Transverse colon (tissue), 4 donors: ENCODE measurements at regions of chr3 and their contacts with region 1.

Region 1: GRCh38 chr3:24264748-24265158 is 229.9 kb downstream of the THRB start:
- DNase-seq: no peak
- H3K4me3 ChIP-seq: no peak overlapping the region
- H3K27ac ChIP-seq: no peak overlapping the region
- H3K4me1 ChIP-seq: peaks cover 0 to 5% (median 0%) of the 10 kb centered on the region in 4 donors
- H3K27me3 ChIP-seq: no peaks in the 10 kb centered on the region
- CTCF ChIP-seq: peak; percentile 63 to 82 (median 76)
- EP300 ChIP-seq: no peak
- POLR2A ChIP-seq: no peak

Region 2: GRCh38 chr3:23533996-23534395 is 730.8 kb before region 1 on chr3:
- in situ Hi-C with region 1: no loop called
- intact Hi-C with region 1: no loop called
- DNase-seq: no peak
- H3K4me3 ChIP-seq: no peak overlapping the region
- H3K27ac ChIP-seq: no peak overlapping the region
- H3K4me1 ChIP-seq: no peaks in the 10 kb centered on the region
- H3K27me3 ChIP-seq: no peaks in the 10 kb centered on the region
- CTCF ChIP-seq: no peak
- EP300 ChIP-seq: no peak
- POLR2A ChIP-seq: no peak

Region 3: GRCh38 chr3:24288496-24289236 is 23.9 kb after region 1 on chr3:
- in situ Hi-C with region 1: no loop called
- intact Hi-C with region 1: loop called (anchors 2 kb)
- DNase-seq: peak; percentile 11
- H3K4me3 ChIP-seq: no peak overlapping the region
- H3K27ac ChIP-seq: peak overlapping the region; percentile 54 to 76 (median 66)
- H3K4me1 ChIP-seq: peaks cover 0 to 33% (median 12%) of the 10 kb centered on the region in 4 donors
- H3K27me3 ChIP-seq: no peaks in the 10 kb centered on the region
- CTCF ChIP-seq: no peak
- EP300 ChIP-seq: no peak
- POLR2A ChIP-seq: no peak

Region 4: DNA sequence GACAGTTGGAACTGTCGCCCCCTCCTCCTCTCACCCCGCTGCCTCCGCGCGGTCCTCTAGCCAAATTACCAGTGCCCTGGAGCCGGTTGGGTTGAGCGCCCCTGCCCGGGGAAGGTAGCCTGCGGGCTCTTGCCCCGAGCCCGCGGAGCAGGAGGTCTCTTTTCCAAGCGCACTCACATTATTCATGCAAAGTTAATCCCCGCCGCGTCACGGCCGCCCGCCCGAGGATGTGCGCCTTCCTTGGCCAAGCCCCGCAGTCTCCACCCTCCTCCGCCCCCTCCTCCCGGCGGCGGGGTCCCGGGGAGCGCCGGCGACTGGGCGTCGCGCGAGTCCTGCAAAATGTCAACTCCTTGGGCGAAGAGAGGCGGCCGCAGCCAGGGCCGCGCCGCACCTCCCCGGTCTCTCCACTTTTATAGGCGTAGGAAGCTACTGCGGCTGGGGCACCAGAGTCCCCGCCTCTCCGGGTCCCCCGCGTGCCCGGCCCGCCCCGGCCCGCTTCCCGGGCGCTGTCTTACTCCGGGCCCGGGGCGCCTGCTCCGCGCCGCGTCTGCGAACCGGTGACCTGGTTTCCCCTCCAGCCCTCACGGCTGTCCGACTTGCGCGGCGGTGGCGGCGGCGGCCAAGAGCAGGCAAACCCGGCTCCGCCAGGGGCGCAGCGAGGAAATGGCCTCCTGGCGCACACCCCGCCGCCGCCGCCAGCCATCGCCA is 230.0 kb after region 1 on chr3 and contains the start of gene THRB:
- in situ Hi-C with region 1: loop called in 1 of 4 experiments (anchors 25 kb)
- intact Hi-C with region 1: loop called (anchors 10 kb)
- DNase-seq: peak; percentile 77
- H3K4me3 ChIP-seq: peak within 1 kb of the TSS; percentile 51 to 80 (median 70)
- H3K27ac ChIP-seq: peak within 1 kb of the TSS; percentile 91 to 97 (median 94)
- H3K4me1 ChIP-seq: peaks cover 0 to 44% (median 23%) of the 10 kb centered on the region in 4 donors
- H3K27me3 ChIP-seq: no peaks in the 10 kb centered on the region
- CTCF ChIP-seq: peak in 2 of 5 experiments; percentile 18 to 23
- EP300 ChIP-seq: no peak
- POLR2A ChIP-seq: peak; percentile 86
- total RNA-seq, gene THRB: 9.8 to 52.4 (median 31.3) TPM

Region 5: DNA sequence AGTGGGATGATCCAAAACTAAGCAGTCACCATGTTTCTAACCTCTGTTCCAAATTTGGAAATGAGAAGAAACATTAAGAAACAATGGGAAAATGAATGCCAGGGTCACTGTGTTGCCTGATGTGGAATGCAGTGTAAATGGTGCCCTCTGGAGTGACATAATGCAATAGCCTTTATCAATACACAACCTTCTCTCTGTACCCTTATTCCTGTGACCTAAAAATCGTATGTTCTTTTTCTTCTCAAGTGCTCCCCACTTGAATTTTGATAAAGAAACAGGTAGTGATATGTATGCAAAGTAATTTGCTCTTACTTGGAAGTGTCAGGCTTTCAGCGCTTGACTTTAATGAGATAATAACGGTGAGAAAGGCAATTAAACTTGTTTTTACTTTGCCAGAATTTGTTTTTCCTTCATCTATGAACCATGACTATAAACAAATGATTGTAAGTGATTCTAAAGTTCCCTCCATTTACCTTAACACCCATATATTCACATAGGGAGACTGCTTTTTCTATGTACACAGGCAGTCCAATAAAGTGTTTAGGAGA is 375.7 kb after region 1 on chr3:
- in situ Hi-C with region 1: loop called in 3 of 4 experiments (anchors 25 kb)
- intact Hi-C with region 1: no loop called
- DNase-seq: no peak
- H3K4me3 ChIP-seq: no peak overlapping the region
- H3K27ac ChIP-seq: no peak overlapping the region
- H3K4me1 ChIP-seq: peaks cover 0 to 16% (median 2%) of the 10 kb centered on the region in 4 donors
- H3K27me3 ChIP-seq: peaks cover 29% of the 10 kb centered on the region
- CTCF ChIP-seq: peak; percentile 35 to 66 (median 43)
- EP300 ChIP-seq: no peak
- POLR2A ChIP-seq: no peak

Region 6: DNA sequence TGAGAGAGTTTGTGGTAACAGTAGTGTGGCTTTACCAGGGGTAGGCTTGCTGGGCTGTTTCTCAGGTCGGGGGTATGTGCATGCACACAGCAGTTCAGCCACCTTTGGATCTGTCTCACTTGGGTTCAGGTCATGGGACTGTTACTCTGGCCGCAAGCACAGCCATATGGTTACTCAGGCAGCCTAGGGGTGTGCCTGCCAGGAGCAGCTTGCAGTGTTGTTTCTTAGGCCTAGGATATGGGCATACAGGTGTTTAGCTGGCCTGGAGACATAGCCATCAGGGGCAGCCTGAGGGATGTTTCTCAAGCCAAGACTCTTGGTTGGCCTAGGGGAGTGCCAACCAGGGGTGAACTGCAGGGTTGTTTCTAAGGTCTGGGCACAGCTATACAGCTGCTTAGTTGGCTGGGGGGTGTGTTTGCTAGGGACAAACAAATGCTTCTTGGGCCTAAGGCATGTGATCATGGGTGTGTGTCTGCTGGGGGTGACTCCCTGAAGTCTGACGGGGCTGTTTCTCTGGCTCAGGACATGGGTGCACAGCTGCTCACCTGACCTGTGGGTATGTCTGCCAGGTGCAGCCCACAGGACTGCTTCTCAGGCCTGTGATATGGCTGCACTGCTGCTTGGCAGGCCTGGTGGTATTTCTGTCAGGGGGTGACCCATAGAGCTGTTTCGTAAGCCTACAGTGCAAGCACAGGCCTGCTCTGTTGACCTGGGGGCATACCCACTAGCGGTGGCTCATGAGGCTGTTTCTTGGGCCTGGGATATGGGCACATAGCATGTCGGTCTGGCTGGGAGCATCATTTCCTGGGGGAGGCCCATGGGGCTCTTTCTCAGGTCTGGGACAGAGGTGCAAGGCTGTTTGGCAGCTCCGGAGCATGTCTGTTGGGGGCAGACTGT is 397.9 kb after region 1 on chr3:
- in situ Hi-C with region 1: loop called in 1 of 4 experiments (anchors 25 kb)
- intact Hi-C with region 1: no loop called
- DNase-seq: no peak
- H3K4me3 ChIP-seq: no peak overlapping the region
- H3K27ac ChIP-seq: no peak overlapping the region
- H3K4me1 ChIP-seq: no peaks in the 10 kb centered on the region
- H3K27me3 ChIP-seq: no peaks in the 10 kb centered on the region
- CTCF ChIP-seq: no peak
- EP300 ChIP-seq: no peak
- POLR2A ChIP-seq: no peak

Region 7: GRCh38 chr3:25973122-25973521 is 1708.4 kb after region 1 on chr3:
- in situ Hi-C with region 1: no loop called
- intact Hi-C with region 1: no loop called
- DNase-seq: no peak
- H3K4me3 ChIP-seq: no peak overlapping the region
- H3K27ac ChIP-seq: no peak overlapping the region
- H3K4me1 ChIP-seq: no peaks in the 10 kb centered on the region
- H3K27me3 ChIP-seq: no peaks in the 10 kb centered on the region
- CTCF ChIP-seq: no peak
- EP300 ChIP-seq: no peak
- POLR2A ChIP-seq: no peak